ENCODE measurements at regions of chr5 and their contacts with region 1.

Region 1: GRCh38 chr5:141564216-141564692 is 54.5 kb downstream of the DIAPH1 start:
- DNase-seq: peak; percentile 48
- ATAC-seq: peak; percentile 56
- H3K4me3 Mint-ChIP-seq: no peak overlapping the region
- H3K27ac Mint-ChIP-seq: peak overlapping the region; percentile 94
- H3K4me1 Mint-ChIP-seq: peaks cover 35% of the 10 kb centered on the region
- H3K27me3 Mint-ChIP-seq: no peaks in the 10 kb centered on the region
- CTCF ChIP-seq: peak; percentile 94

Region 2: DNA sequence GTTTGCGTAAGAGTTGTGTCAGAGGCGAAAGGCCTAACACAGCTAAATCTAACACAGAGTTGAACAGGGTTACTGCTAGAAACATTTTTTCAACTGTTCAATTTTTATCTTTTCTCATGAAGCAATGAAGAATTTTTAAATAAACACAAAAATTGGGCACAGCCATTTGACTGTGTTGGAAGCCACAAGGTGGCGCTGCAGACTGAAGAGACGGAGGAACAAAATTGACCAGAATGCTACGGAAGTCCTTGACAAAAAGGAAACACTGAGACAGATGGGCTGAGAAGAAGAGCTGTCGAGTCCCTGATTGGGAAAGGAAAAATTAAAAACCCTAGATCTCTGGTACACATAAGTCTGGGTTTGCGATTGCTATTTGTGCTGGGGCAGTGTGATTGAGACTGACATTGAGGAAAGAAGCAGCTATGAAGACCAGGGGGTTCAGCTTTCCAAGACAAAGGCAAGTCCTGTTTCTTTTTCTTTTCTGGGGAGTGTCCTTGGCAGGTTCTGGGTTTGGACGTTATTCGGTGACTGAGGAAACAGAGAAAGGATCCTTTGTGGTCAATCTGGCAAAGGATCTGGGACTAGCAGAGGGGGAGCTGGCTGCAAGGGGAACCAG is 377.2 kb before region 1 on chr5 and contains the start of gene PCDHB9:
- CTCF ChIA-PET with region 1: interaction called, 13 read pairs
- POLR2A ChIA-PET with region 1: no interaction called
- DNase-seq: peak; percentile 71
- ATAC-seq: peak; percentile 58
- H3K4me3 Mint-ChIP-seq: peak within 1 kb of the TSS; percentile 21
- H3K27ac Mint-ChIP-seq: no peak within 1 kb of the TSS; the same call in 1 of the 2 replicates
- H3K4me1 Mint-ChIP-seq: peaks cover 15% of the 10 kb centered on the region
- H3K27me3 Mint-ChIP-seq: peaks cover 4% of the 10 kb centered on the region; the same call in 1 of the 2 replicates
- CTCF ChIP-seq: peak; percentile 49; the same call in 1 of the 2 replicates
- total RNA-seq, gene PCDHB9: 1.6 to 2.3 TPM (median 1.7 TPM) in 3 replicates

Region 3: GRCh38 chr5:141338538-141339306 is 225.5 kb before region 1 on chr5 and contains the start of gene PCDHGA2:
- CTCF ChIA-PET with region 1: interaction called, 22 read pairs
- POLR2A ChIA-PET with region 1: no interaction called
- DNase-seq: peak; percentile 60
- ATAC-seq: peak; percentile 78
- H3K4me3 Mint-ChIP-seq: peak within 1 kb of the TSS; percentile 30; the same call in 1 of the 2 replicates
- H3K27ac Mint-ChIP-seq: no peak within 1 kb of the TSS
- H3K4me1 Mint-ChIP-seq: peaks cover 1% of the 10 kb centered on the region; the same call in 1 of the 2 replicates
- H3K27me3 Mint-ChIP-seq: no peaks in the 10 kb centered on the region; the same call in 1 of the 2 replicates
- CTCF ChIP-seq: peak; percentile 30; the same call in 1 of the 2 replicates
- total RNA-seq, gene PCDHGA2: 0.66 to 0.96 TPM (median 0.94 TPM) in 3 replicates

Region 4: GRCh38 chr5:141402553-141403260 is 161.5 kb before region 1 on chr5 and contains the start of gene PCDHGA9:
- CTCF ChIA-PET with region 1: interaction called, 24 read pairs
- POLR2A ChIA-PET with region 1: no interaction called
- DNase-seq: no peak
- ATAC-seq: no peak
- H3K4me3 Mint-ChIP-seq: no peak within 1 kb of the TSS
- H3K27ac Mint-ChIP-seq: no peak within 1 kb of the TSS
- H3K4me1 Mint-ChIP-seq: no peaks in the 10 kb centered on the region
- H3K27me3 Mint-ChIP-seq: peaks cover 14% of the 10 kb centered on the region
- CTCF ChIP-seq: no peak
- total RNA-seq, gene PCDHGA9: 1.9 to 2.9 TPM (median 2.3 TPM) in 3 replicates

Region 5: DNA sequence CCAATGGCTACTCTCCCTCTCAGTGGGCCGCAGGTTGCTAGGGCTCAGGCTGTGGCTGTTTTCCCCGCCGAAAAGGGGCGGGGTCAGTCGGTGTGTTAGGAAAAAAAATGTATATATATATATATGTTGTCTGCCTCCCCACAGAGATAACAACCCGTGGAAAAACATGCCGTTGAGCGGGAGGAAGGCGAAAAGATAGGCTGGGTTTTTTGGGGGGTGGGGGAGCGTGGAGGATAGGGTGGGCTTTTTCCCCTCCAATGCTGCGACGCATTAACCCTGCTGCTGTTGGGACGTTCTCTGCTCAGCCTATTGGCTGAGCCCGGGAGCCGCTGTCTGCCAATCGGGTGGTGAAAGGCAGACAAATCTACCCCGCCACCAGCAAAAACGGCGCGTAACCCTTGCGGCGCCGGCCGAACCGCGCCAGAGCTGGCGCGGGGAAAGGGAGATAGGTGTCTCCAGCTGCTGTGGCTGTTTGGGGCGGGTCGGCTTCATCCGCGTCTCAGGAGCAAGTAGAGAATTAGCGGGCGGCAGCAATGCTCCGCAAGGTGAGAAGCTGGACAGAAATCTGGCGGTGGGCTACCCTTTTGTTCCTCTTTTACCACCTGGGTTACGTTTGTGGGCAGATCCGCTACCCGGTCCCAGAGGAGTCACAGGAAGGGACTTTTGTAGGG is 79.5 kb before region 1 on chr5 and contains the start of gene PCDHGC4:
- CTCF ChIA-PET with region 1: interaction called, 10 read pairs
- POLR2A ChIA-PET with region 1: no interaction called
- DNase-seq: peak; percentile 84
- ATAC-seq: peak; percentile 89
- H3K4me3 Mint-ChIP-seq: peak within 1 kb of the TSS; percentile 71
- H3K27ac Mint-ChIP-seq: peak within 1 kb of the TSS; percentile 90
- H3K4me1 Mint-ChIP-seq: peaks cover 60% of the 10 kb centered on the region
- H3K27me3 Mint-ChIP-seq: peaks cover 33% of the 10 kb centered on the region
- CTCF ChIP-seq: no peak
- total RNA-seq, gene PCDHGC4: 4.5 to 6.1 TPM (median 5.1 TPM) in 3 replicates

Region 6: GRCh38 chr5:141618804-141619554 is 54.7 kb after region 1 on chr5 and contains the start of gene DIAPH1:
- CTCF ChIA-PET with region 1: interaction called, 21 read pairs
- POLR2A ChIA-PET with region 1: no interaction called
- DNase-seq: peak; percentile 97
- ATAC-seq: peak; percentile 94
- H3K4me3 Mint-ChIP-seq: peak within 1 kb of the TSS; percentile 95
- H3K27ac Mint-ChIP-seq: peak within 1 kb of the TSS; percentile 97
- H3K4me1 Mint-ChIP-seq: peaks cover 41% of the 10 kb centered on the region
- H3K27me3 Mint-ChIP-seq: no peaks in the 10 kb centered on the region; the same call in 1 of the 2 replicates
- CTCF ChIP-seq: peak; percentile 93
- total RNA-seq, gene DIAPH1: 90.9 to 109 TPM (median 96.0 TPM) in 3 replicates

Measured in WTC11 (cell line).